ENCODE measurements at regions of chr14 and their contacts with region 1.

Region 1: DNA sequence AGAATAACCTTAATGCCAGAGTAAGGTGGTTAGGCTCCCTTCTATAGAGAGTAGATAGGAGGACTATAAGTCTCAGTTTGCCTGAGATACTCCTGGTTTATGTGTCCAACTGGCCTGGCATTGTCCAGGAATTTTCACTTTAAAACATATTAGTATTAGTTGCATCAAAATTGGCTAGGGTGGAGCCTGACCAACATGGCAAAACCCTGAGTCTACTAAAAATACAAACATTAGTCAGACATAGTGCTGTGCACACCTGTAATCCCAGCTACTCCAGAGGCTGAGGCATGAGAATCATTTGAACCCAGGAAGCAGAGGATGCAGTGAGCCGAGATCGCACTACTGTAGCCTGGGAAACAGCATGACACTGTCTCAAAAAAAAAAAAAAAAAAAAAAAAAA is 11.9 kb downstream of the WDHD1 start:
- DNase-seq: no peak
- H3K4me3 ChIP-seq: no peak overlapping the region
- H3K4me3 Mint-ChIP-seq: no peak overlapping the region
- H3K27ac ChIP-seq: no peak overlapping the region
- H3K27ac Mint-ChIP-seq: no peak overlapping the region
- H3K4me1 ChIP-seq: no peaks in the 10 kb centered on the region
- H3K4me1 Mint-ChIP-seq: no peaks in the 10 kb centered on the region
- H3K27me3 ChIP-seq: no peaks in the 10 kb centered on the region
- H3K27me3 Mint-ChIP-seq: no peaks in the 10 kb centered on the region

Region 2: DNA sequence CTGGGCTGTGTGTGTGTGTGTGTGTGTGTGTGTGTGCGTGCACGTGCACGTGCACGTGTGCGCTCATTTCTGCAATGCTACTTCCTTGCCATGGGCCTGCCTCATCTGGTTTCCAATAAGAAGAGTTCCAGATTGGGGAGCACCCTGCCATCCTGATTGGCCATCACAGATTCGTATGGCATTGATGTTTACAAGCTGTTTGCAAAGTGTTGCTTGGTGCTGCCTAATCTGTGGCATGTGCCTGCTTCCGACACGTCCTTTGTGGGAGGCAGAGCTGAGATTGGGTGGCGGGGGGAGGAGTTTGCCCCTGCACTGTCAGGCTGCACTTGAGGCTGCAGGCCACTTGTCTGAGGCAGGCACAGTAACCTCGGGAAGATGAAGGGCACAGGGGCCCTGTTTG is 408.8 kb before region 1 on chr14:
- CTCF ChIA-PET with region 1: no interaction called
- POLR2A ChIA-PET with region 1: no interaction called
- DNase-seq: no peak
- H3K4me3 ChIP-seq: no peak overlapping the region
- H3K4me3 Mint-ChIP-seq: no peak overlapping the region
- H3K27ac ChIP-seq: no peak overlapping the region
- H3K27ac Mint-ChIP-seq: peak overlapping the region in 1 of 8 donors; percentile 20
- H3K4me1 ChIP-seq: no peaks in the 10 kb centered on the region
- H3K4me1 Mint-ChIP-seq: no peaks in the 10 kb centered on the region
- H3K27me3 ChIP-seq: no peaks in the 10 kb centered on the region
- H3K27me3 Mint-ChIP-seq: peaks cover 3 to 30% of the 10 kb centered on the region in 2 donors

Region 3: DNA sequence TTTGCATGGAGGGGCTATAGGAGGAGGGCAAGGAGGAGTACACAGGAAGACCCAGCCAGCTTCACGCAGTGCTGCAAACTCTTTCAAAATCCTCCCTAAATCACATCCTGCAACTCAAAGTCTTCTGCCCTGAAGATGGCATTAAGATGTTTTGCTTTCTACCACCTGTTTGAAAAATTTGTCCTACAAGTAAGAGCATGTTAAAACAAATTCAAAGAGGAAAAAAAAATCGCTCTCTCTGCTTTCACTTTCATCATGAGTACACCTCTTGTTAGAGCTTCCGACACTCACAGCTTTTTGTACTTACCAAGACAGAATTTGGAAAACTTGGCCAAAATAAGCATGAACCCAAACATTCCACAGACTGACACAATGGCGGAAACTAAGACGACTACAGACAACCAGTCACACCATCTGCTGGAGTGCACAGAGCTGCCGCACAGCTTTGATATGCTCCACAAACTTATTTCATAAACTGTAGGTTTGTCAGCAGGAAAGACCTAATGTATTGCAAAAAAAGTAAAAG is 133.7 kb before region 1 on chr14:
- CTCF ChIA-PET with region 1: no interaction called
- POLR2A ChIA-PET with region 1: no interaction called
- DNase-seq: peak in 2 of 5 donors; percentile 34 to 60
- H3K4me3 ChIP-seq: peak overlapping the region; percentile 48
- H3K4me3 Mint-ChIP-seq: peak overlapping the region; percentile 88 to 93 (median 89)
- H3K27ac ChIP-seq: peak overlapping the region; percentile 70
- H3K27ac Mint-ChIP-seq: peak overlapping the region; percentile 87 to 97 (median 96)
- H3K4me1 ChIP-seq: peaks cover 25% of the 10 kb centered on the region
- H3K4me1 Mint-ChIP-seq: peaks cover 38 to 62% (median 59%) of the 10 kb centered on the region in 3 donors
- H3K27me3 ChIP-seq: no peaks in the 10 kb centered on the region
- H3K27me3 Mint-ChIP-seq: no peaks in the 10 kb centered on the region

Region 4: GRCh38 chr14:54981698-54982097 is 33.3 kb before region 1 on chr14:
- CTCF ChIA-PET with region 1: no interaction called
- POLR2A ChIA-PET with region 1: no interaction called
- DNase-seq: no peak
- H3K4me3 ChIP-seq: no peak overlapping the region
- H3K4me3 Mint-ChIP-seq: no peak overlapping the region
- H3K27ac ChIP-seq: no peak overlapping the region
- H3K27ac Mint-ChIP-seq: peak overlapping the region in 1 of 8 donors; percentile 36
- H3K4me1 ChIP-seq: no peaks in the 10 kb centered on the region
- H3K4me1 Mint-ChIP-seq: peaks cover 0 to 5% (median 0%) of the 10 kb centered on the region in 3 donors
- H3K27me3 ChIP-seq: no peaks in the 10 kb centered on the region
- H3K27me3 Mint-ChIP-seq: no peaks in the 10 kb centered on the region

Region 5: DNA sequence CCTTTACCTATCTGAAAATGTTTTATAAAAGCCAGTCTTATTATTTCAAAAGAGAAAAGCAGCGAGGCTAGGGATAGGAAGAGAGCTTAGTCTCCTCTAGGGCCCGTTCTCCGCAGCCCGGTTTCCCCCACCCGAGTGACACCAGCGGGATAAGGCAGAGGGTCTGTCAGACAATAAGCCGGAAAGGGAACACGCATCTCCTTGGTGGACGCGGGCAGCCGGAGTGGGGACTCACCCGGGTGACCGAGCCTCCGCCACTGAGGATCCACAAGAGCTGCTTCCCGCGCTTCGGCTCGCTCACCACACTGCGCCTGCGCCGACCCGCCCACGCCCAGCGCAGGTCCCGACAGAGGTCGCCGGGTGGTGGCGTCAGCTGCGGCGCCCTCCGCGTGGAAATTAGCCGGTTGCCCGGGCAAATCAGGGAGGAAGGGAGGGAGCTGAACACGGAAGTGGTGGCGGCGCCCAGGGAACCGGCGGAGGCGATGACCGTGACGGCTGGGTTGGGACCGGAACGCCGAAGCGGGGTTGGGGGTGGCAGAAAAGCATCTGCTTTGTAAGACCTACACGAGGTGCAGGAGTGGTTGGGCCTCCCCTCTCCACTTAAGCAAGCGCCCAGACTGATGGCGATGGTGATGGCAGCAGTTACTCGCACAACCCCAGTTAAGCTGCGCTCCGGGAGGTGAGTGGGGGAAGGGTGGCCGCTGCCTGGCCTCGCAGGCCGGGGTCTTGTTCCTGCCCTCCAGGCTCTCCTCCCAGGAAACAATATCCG is 12.0 kb after region 1 on chr14 and contains the starts of genes SOCS4 and WDHD1:
- CTCF ChIA-PET with region 1: interaction called, 3 read pairs
- POLR2A ChIA-PET with region 1: interaction called, 10 read pairs
- DNase-seq: peak; percentile 96 to 97 (median 96)
- H3K4me3 ChIP-seq: peak within 1 kb of the TSS; percentile 72
- H3K4me3 Mint-ChIP-seq: peak within 1 kb of the TSS; percentile 92 to 100 (median 94)
- H3K27ac ChIP-seq: peak within 1 kb of the TSS; percentile 83
- H3K27ac Mint-ChIP-seq: peak within 1 kb of the TSS; percentile 89 to 99 (median 95)
- H3K4me1 ChIP-seq: peaks cover 19% of the 10 kb centered on the region
- H3K4me1 Mint-ChIP-seq: peaks cover 50 to 63% (median 59%) of the 10 kb centered on the region in 3 donors
- H3K27me3 ChIP-seq: no peaks in the 10 kb centered on the region
- H3K27me3 Mint-ChIP-seq: no peaks in the 10 kb centered on the region
- total RNA-seq, gene SOCS4: 38.0 to 44.8 TPM
- total RNA-seq, gene WDHD1: 56.3 to 56.6 TPM

Measured in CD8-positive, alpha-beta memory T cell (primary cell).